ENCODE measurements at regions of chr1 and their contacts with region 1.

Region 1: GRCh38 chr1:198187973-198188588 is 31.3 kb downstream of the NEK7 start:
- DNase-seq: peak; percentile 57 to 74 (median 68)
- H3K4me3 ChIP-seq: peak overlapping the region in 1 of 2 donors; percentile 26
- H3K4me3 Mint-ChIP-seq: peak overlapping the region; percentile 7 to 84 (median 67)
- H3K27ac ChIP-seq: peak overlapping the region; percentile 57
- H3K27ac Mint-ChIP-seq: peak overlapping the region; percentile 76 to 93 (median 88)
- H3K4me1 ChIP-seq: peaks cover 94% of the 10 kb centered on the region
- H3K4me1 Mint-ChIP-seq: peaks cover 54 to 84% (median 74%) of the 10 kb centered on the region in 4 donors
- H3K27me3 ChIP-seq: no peaks in the 10 kb centered on the region
- H3K27me3 Mint-ChIP-seq: no peaks in the 10 kb centered on the region

Region 2: GRCh38 chr1:198167436-198167934 is 20.6 kb before region 1 on chr1:
- CTCF ChIA-PET with region 1: interaction called, 6 read pairs
- POLR2A ChIA-PET with region 1: interaction called, 34 read pairs
- intact Hi-C with region 1: loop called (anchors 2 kb)
- DNase-seq: peak; percentile 54 to 77 (median 60)
- H3K4me3 ChIP-seq: no peak overlapping the region
- H3K4me3 Mint-ChIP-seq: peak overlapping the region; percentile 43 to 90 (median 76)
- H3K27ac ChIP-seq: peak overlapping the region; percentile 53
- H3K27ac Mint-ChIP-seq: peak overlapping the region; percentile 80 to 94 (median 90)
- H3K4me1 ChIP-seq: peaks cover 96% of the 10 kb centered on the region
- H3K4me1 Mint-ChIP-seq: peaks cover 65 to 87% (median 78%) of the 10 kb centered on the region in 4 donors
- H3K27me3 ChIP-seq: no peaks in the 10 kb centered on the region
- H3K27me3 Mint-ChIP-seq: no peaks in the 10 kb centered on the region

Region 3: GRCh38 chr1:198175423-198176170 is 12.5 kb before region 1 on chr1:
- CTCF ChIA-PET with region 1: interaction called, 4 read pairs
- POLR2A ChIA-PET with region 1: interaction called, 21 read pairs
- intact Hi-C with region 1: loop called (anchors 1 kb)
- DNase-seq: peak; percentile 34 to 53 (median 40)
- H3K4me3 ChIP-seq: peak overlapping the region in 1 of 2 donors; percentile 7
- H3K4me3 Mint-ChIP-seq: peak overlapping the region; percentile 33 to 81 (median 69)
- H3K27ac ChIP-seq: peak overlapping the region; percentile 42
- H3K27ac Mint-ChIP-seq: peak overlapping the region; percentile 79 to 96 (median 84)
- H3K4me1 ChIP-seq: peaks cover 98% of the 10 kb centered on the region
- H3K4me1 Mint-ChIP-seq: peaks cover 73 to 90% (median 81%) of the 10 kb centered on the region in 4 donors
- H3K27me3 ChIP-seq: no peaks in the 10 kb centered on the region
- H3K27me3 Mint-ChIP-seq: no peaks in the 10 kb centered on the region

Region 4: DNA sequence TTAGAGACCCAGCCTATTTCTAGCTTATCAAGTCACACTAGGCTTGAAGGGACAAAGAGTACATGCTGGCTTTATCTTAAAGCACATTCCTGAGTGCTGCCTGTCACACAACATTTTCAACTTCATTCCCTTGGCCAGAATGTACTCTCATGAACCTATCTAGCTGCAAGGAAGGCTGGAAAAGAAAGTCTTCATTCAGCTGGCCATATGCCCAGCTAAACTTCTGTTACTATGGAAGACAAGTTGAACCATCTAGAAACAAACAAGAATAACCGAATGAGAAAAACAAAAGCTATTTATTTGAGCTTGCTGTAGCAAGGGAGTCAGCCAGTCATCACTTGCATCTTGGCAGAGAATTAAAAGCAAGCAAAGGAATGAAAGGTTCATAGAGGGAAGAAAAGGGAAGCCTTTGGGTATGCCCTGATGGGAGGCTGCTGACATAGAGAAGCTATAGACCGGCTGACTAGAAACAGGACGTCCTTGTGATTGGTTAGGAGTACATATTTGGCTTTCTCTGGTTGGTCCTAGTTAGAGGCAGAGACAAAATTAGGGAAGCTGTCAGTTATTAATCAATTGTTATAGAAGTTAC is 77.1 kb after region 1 on chr1:
- CTCF ChIA-PET with region 1: no interaction called
- POLR2A ChIA-PET with region 1: no interaction called
- intact Hi-C with region 1: no loop called
- DNase-seq: no peak
- H3K4me3 ChIP-seq: no peak overlapping the region
- H3K4me3 Mint-ChIP-seq: no peak overlapping the region
- H3K27ac ChIP-seq: no peak overlapping the region
- H3K27ac Mint-ChIP-seq: peak overlapping the region in 1 of 7 donors; percentile 4
- H3K4me1 ChIP-seq: peaks cover 4% of the 10 kb centered on the region
- H3K4me1 Mint-ChIP-seq: peaks cover 8 to 13% (median 12%) of the 10 kb centered on the region in 4 donors
- H3K27me3 ChIP-seq: no peaks in the 10 kb centered on the region
- H3K27me3 Mint-ChIP-seq: no peaks in the 10 kb centered on the region

Measured in CD4-positive, alpha-beta memory T cell (primary cell).